ENCODE measurements at regions of chr1 and their contacts with region 1.

Region 1: GRCh38 chr1:58816072-58816746 is 32.4 kb upstream of the JUN start:
- DNase-seq: peak; percentile 90
- H3K4me3 Mint-ChIP-seq: peak overlapping the region; percentile 81
- H3K27ac Mint-ChIP-seq: peak overlapping the region; percentile 71
- H3K4me1 Mint-ChIP-seq: peaks cover 33% of the 10 kb centered on the region
- H3K27me3 Mint-ChIP-seq: no peaks in the 10 kb centered on the region

Region 2: GRCh38 chr1:58735586-58735985 is 80.6 kb before region 1 on chr1:
- CTCF ChIA-PET with region 1: no interaction called
- intact Hi-C with region 1: no loop called
- DNase-seq: no peak
- H3K4me3 Mint-ChIP-seq: no peak overlapping the region
- H3K27ac Mint-ChIP-seq: no peak overlapping the region
- H3K4me1 Mint-ChIP-seq: no peaks in the 10 kb centered on the region
- H3K27me3 Mint-ChIP-seq: no peaks in the 10 kb centered on the region

Region 3: DNA sequence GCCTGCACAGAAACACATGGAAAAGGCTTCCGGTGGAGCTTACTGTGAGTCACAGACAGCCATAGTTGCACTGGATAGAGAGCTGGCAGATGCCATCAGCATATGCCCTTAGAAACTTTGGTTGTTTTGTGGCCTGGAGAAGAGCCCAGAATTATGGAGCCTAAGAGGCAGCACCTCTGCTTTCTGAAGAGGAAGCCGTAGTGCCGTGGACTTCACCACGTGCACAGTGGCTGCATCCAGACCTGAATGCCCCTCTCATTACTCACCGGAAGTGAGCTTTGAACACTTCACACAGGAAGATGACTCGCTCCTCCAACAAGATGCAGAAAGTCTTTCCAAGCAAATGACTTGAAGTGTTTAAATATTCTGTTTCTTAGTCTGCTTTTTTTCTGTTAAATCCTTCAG is 60.7 kb before region 1 on chr1:
- CTCF ChIA-PET with region 1: no interaction called
- intact Hi-C with region 1: loop called (anchors 2 kb)
- DNase-seq: peak; percentile 86
- H3K4me3 Mint-ChIP-seq: no peak overlapping the region
- H3K27ac Mint-ChIP-seq: peak overlapping the region; percentile 71
- H3K4me1 Mint-ChIP-seq: peaks cover 41% of the 10 kb centered on the region
- H3K27me3 Mint-ChIP-seq: no peaks in the 10 kb centered on the region

Region 4: GRCh38 chr1:58857680-58858673 is 41.8 kb after region 1 on chr1:
- CTCF ChIA-PET with region 1: interaction called, 3 read pairs
- intact Hi-C with region 1: loop called (anchors 1 kb)
- DNase-seq: peak; percentile 60
- H3K4me3 Mint-ChIP-seq: no peak overlapping the region
- H3K27ac Mint-ChIP-seq: peak overlapping the region; percentile 82
- H3K4me1 Mint-ChIP-seq: peaks cover 44% of the 10 kb centered on the region
- H3K27me3 Mint-ChIP-seq: no peaks in the 10 kb centered on the region

Region 5: DNA sequence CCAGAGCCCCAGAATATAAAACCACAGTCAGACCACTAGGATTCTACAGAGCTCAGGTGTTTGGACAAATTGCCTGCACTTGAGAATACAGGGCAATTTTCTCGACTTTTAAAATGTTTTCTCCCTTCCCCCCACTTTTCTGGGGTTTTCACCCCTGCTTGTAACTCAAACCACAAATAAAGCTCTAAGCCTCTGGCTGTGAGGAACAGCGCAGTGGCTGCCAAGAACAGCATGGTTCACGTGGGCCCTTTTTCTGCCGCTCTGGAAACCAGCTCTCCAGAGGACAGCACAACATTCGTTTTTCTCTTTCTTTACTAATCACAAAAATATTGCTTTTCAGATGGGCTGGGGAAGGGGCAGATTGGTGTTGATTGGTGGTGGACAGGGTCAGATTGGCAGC is 69.8 kb after region 1 on chr1:
- CTCF ChIA-PET with region 1: no interaction called
- intact Hi-C with region 1: loop called (anchors 1 kb)
- DNase-seq: peak; percentile 64
- H3K4me3 Mint-ChIP-seq: no peak overlapping the region
- H3K27ac Mint-ChIP-seq: peak overlapping the region; percentile 25
- H3K4me1 Mint-ChIP-seq: peaks cover 43% of the 10 kb centered on the region
- H3K27me3 Mint-ChIP-seq: no peaks in the 10 kb centered on the region

Region 6: GRCh38 chr1:59007820-59008598 is 191.8 kb after region 1 on chr1:
- CTCF ChIA-PET with region 1: no interaction called
- intact Hi-C with region 1: loop called (anchors 5 kb)
- DNase-seq: peak; percentile 64
- H3K4me3 Mint-ChIP-seq: no peak overlapping the region
- H3K27ac Mint-ChIP-seq: peak overlapping the region; percentile 39
- H3K4me1 Mint-ChIP-seq: peaks cover 40% of the 10 kb centered on the region
- H3K27me3 Mint-ChIP-seq: no peaks in the 10 kb centered on the region

Region 7: GRCh38 chr1:59100708-59101374 is 284.6 kb after region 1 on chr1:
- CTCF ChIA-PET with region 1: no interaction called
- intact Hi-C with region 1: no loop called
- DNase-seq: no peak
- H3K4me3 Mint-ChIP-seq: no peak overlapping the region
- H3K27ac Mint-ChIP-seq: no peak overlapping the region
- H3K4me1 Mint-ChIP-seq: no peaks in the 10 kb centered on the region
- H3K27me3 Mint-ChIP-seq: no peaks in the 10 kb centered on the region

Measured in activated naive CD4-positive, alpha-beta T cell treated with anti-CD3 and anti-CD28 coated beads for 36 hours (primary cell).